Activated CD8-positive, alpha-beta T cell treated with anti-CD3 and anti-CD28 coated beads for 36 hours (primary cell): ENCODE measurements at regions of chr9 and their contacts with region 1.

Region 1: DNA sequence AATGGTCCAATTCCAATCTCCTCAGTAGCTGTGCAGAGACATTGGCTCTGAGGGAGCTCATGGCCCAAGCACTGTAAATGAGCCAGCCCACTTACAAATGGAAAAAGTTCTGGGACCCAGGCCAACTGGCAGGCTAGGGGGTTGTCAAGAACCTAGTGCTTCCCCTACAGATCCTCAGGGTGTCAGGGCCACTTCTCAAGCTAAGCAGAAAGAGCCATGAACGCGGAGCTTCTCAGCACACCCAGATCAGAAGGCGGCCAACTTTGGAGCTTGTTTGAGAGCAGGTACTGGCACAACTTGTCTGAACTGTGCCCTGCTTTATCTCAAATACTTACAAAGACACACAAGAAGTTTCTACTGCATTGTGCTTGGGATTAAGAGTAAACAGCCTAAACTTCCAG is 17.5 kb downstream of the TLE1 start:
- DNase-seq: no peak
- ATAC-seq: no peak
- H3K4me3 Mint-ChIP-seq: no peak overlapping the region
- H3K27ac Mint-ChIP-seq: no peak overlapping the region
- H3K4me1 Mint-ChIP-seq: no peaks in the 10 kb centered on the region
- H3K27me3 Mint-ChIP-seq: peaks cover 2% of the 10 kb centered on the region
- CTCF ChIP-seq: no peak

Region 2: GRCh38 chr9:81609782-81610739 is 61.8 kb before region 1 on chr9:
- CTCF ChIA-PET with region 1: no interaction called
- POLR2A ChIA-PET with region 1: no interaction called
- intact Hi-C with region 1: loop called (anchors 10 kb)
- DNase-seq: no peak
- ATAC-seq: no peak
- H3K4me3 Mint-ChIP-seq: no peak overlapping the region
- H3K27ac Mint-ChIP-seq: no peak overlapping the region
- H3K4me1 Mint-ChIP-seq: peaks cover 8% of the 10 kb centered on the region
- H3K27me3 Mint-ChIP-seq: no peaks in the 10 kb centered on the region
- CTCF ChIP-seq: no peak

Region 3: DNA sequence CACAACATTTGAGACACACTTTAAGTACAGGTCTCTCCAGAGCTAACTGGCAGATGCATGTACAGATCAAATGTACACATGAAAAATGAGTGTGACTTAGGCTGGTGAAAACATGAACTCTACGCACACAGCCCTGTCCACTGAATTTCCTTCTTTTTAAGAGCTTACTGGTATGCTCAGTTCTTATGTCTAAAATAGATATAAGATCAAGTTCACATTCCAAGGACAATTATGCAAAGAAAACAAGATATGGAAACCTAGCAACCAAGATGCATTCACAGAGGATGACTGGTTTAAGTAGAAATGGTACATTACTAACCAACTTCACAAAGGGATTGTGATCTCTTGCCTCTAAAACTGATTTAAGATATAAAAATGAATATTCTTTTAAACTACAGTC is 39.3 kb before region 1 on chr9:
- CTCF ChIA-PET with region 1: no interaction called
- POLR2A ChIA-PET with region 1: no interaction called
- intact Hi-C with region 1: no loop called
- DNase-seq: no peak
- ATAC-seq: no peak
- H3K4me3 Mint-ChIP-seq: no peak overlapping the region
- H3K27ac Mint-ChIP-seq: no peak overlapping the region
- H3K4me1 Mint-ChIP-seq: no peaks in the 10 kb centered on the region
- H3K27me3 Mint-ChIP-seq: no peaks in the 10 kb centered on the region
- CTCF ChIP-seq: no peak